Heart right ventricle (tissue), 16 donors: ENCODE measurements at regions of chr3 and their contacts with region 1.

Region 1: GRCh38 chr3:172039436-172040077 is at the start of gene FNDC3B:
- DNase-seq: peak; percentile 92 to 96
- ATAC-seq: peak; percentile 85 to 94 (median 91)
- H3K4me3 ChIP-seq: peak within 1 kb of the TSS; percentile 87 to 100 (median 95)
- H3K27ac ChIP-seq: peak within 1 kb of the TSS; percentile 98 to 100 (median 99)
- H3K4me1 ChIP-seq: peaks cover 0 to 46% (median 38%) of the 10 kb centered on the region in 9 donors
- H3K27me3 ChIP-seq: no peaks in the 10 kb centered on the region
- CTCF ChIP-seq: no peak
- total RNA-seq, gene FNDC3B: 65.6 to 118 (median 89.0) TPM

Region 2: GRCh38 chr3:171829841-171830517 is 209.6 kb before region 1 on chr3:
- intact Hi-C with region 1: loop called in 2 of 10 experiments (anchors 5 to 10 kb)
- DNase-seq: peak; percentile 81 to 87
- ATAC-seq: peak; percentile 86 to 95 (median 93)
- H3K4me3 ChIP-seq: no peak overlapping the region
- H3K27ac ChIP-seq: peak overlapping the region; percentile 28 to 81 (median 60)
- H3K4me1 ChIP-seq: peaks cover 3 to 65% (median 40%) of the 10 kb centered on the region in 9 donors
- H3K27me3 ChIP-seq: no peaks in the 10 kb centered on the region
- CTCF ChIP-seq: peak; percentile 44 to 81 (median 70)

Region 3: GRCh38 chr3:172021164-172021563 is 18.4 kb before region 1 on chr3:
- intact Hi-C with region 1: no loop called
- DNase-seq: no peak
- ATAC-seq: peak in 3 of 8 donors; percentile 51 to 68 (median 55)
- H3K4me3 ChIP-seq: no peak overlapping the region
- H3K27ac ChIP-seq: no peak overlapping the region
- H3K4me1 ChIP-seq: no peaks in the 10 kb centered on the region
- H3K27me3 ChIP-seq: no peaks in the 10 kb centered on the region
- CTCF ChIP-seq: no peak

Region 4: DNA sequence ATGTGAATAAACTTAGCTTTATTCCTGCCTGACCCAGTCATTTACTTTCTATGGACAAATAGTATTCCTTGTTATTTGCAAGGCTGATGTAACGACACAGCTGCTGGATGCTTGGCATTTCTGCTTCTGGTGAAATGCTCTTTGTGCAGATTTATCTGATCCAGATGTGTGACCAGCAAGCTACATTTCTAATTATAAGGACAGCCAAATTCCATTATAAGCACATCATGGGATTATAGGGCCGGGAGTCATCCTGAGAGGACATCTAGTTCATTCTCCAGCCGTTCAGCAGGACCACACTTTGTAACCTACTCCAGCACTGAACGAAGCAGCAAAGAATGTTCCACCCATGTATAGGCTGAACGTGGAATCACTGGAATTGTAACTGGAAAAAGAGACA is 42.7 kb after region 1 on chr3:
- intact Hi-C with region 1: loop called in 1 of 10 experiments (anchors 5 kb)
- DNase-seq: peak in 1 of 2 donors; percentile 44
- ATAC-seq: peak; percentile 57 to 96 (median 90)
- H3K4me3 ChIP-seq: no peak overlapping the region
- H3K27ac ChIP-seq: peak overlapping the region in 9 of 10 donors; percentile 46 to 90 (median 63)
- H3K4me1 ChIP-seq: peaks cover 13 to 73% (median 60%) of the 10 kb centered on the region in 9 donors
- H3K27me3 ChIP-seq: no peaks in the 10 kb centered on the region
- CTCF ChIP-seq: no peak

Region 5: GRCh38 chr3:172153335-172153861 is 113.8 kb after region 1 on chr3:
- intact Hi-C with region 1: loop called in 1 of 10 experiments (anchors 5 kb)
- DNase-seq: peak; percentile 79 to 92
- ATAC-seq: peak; percentile 97 to 100 (median 98)
- H3K4me3 ChIP-seq: peak overlapping the region in 3 of 10 donors; percentile 3 to 11 (median 8)
- H3K27ac ChIP-seq: peak overlapping the region; percentile 64 to 89 (median 86)
- H3K4me1 ChIP-seq: peaks cover 22 to 86% (median 73%) of the 10 kb centered on the region in 9 donors
- H3K27me3 ChIP-seq: no peaks in the 10 kb centered on the region
- CTCF ChIP-seq: no peak

Region 6: DNA sequence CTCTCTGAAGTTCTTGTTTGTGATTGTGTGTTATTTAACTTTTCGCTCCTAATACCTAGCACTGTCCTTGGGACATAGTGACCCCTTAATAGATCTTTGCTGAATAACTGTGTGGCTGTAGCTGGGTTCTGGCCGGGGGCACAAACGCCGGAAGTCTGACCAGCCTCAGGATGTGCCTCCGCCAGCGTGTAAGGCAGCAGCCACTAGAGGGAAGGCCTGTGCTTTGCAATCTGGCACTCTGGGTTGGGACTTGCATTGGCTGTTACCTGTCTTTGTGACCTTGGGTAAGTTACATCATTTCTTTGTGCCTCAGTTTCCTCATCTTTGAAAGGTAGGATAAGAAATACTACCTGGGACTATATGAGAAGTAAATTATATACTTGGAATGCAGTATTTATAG is 250.0 kb after region 1 on chr3:
- intact Hi-C with region 1: loop called in 3 of 10 experiments (anchors 2 to 10 kb)
- DNase-seq: peak; percentile 39 to 51
- ATAC-seq: peak in 7 of 8 donors; percentile 38 to 75 (median 55)
- H3K4me3 ChIP-seq: peak overlapping the region in 2 of 10 donors; percentile 15 to 17
- H3K27ac ChIP-seq: peak overlapping the region; percentile 40 to 84 (median 68)
- H3K4me1 ChIP-seq: peaks cover 14 to 84% (median 60%) of the 10 kb centered on the region in 9 donors
- H3K27me3 ChIP-seq: no peaks in the 10 kb centered on the region
- CTCF ChIP-seq: peak; percentile 25 to 70 (median 57)

Region 7: DNA sequence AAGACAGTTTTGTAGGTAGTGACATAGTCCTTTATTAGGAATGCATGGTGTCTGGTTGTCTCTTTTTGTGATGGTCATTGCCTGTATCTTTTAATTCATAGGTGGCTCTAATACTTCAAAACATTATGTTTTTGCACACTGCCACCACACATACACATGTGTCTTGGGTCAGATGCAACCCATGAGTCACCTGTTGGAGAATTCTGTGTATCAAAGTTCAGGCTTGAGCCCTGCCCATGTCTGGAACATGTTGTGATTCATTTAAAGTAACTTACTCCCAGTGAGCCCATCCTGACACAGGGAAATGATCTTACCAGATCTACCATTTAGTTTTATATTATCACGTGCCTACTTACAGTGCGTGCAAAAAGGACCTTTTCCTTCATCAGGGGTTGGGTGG is 266.0 kb after region 1 on chr3:
- intact Hi-C with region 1: no loop called
- DNase-seq: no peak
- ATAC-seq: peak in 2 of 8 donors; percentile 39 to 71
- H3K4me3 ChIP-seq: no peak overlapping the region
- H3K27ac ChIP-seq: no peak overlapping the region
- H3K4me1 ChIP-seq: peaks cover 0 to 46% (median 12%) of the 10 kb centered on the region in 9 donors
- H3K27me3 ChIP-seq: no peaks in the 10 kb centered on the region
- CTCF ChIP-seq: no peak

Region 8: DNA sequence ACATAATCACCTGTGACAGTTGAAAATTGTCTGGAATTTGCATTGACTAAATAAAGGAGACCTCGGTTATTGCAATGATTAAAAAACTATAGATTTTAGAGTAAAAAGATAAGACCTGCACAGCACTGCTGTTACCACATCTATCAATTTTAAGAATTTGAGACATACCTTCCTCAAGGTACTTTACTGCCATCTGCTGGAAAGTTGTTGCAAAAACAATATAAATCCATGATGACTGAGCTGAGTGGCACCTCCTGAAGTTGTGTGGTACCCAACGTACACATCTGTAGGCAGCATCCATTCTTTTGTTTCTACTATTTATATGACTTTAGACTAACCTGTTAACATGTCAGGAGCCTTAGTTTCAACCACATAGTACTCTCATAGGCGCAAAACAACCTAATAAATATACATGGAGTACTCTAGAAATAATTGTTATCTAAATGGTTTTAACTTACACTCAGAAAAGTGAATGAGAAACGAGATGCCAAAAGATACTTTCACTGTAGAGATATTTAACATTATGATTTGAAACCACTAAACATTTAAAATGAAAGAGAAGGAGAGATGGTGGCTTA is 302.0 kb after region 1 on chr3:
- intact Hi-C with region 1: loop called in 3 of 10 experiments (anchors 10 kb)
- DNase-seq: no peak
- ATAC-seq: peak; percentile 54 to 78 (median 68)
- H3K4me3 ChIP-seq: no peak overlapping the region
- H3K27ac ChIP-seq: peak overlapping the region in 1 of 10 donors; percentile 26
- H3K4me1 ChIP-seq: no peaks in the 10 kb centered on the region
- H3K27me3 ChIP-seq: no peaks in the 10 kb centered on the region
- CTCF ChIP-seq: peak; percentile 50 to 85 (median 75)